Gastrocnemius medialis (tissue), 4 donors: ENCODE measurements at regions of chr10 and their contacts with region 1.

Region 1: DNA sequence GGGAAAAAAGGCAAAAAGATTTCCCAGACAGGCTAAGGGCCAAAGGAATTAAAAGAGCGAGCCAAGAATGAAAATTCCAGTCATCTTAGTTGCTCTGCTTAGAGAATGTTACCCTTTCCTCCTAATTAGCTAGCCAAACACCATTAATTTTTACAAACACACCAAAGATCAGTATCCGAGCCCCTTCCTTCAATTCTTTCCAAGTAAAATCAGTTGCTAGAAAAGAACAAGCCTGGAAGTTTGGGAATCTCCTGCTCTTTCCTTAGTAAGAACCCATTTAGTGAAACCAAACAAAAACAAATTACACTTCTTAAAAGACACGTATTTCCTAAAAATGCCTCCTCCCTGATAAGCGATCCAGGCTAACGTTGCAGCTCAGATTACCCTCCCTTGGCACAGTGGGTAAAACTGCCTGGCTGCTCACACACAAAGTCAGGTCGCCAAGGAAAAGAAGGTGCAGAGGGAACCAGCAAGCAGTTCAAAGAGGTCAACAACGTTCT is 57.1 kb upstream of the ABLIM1 start:
- DNase-seq: no peak
- ATAC-seq: peak; percentile 51 to 52
- H3K4me3 ChIP-seq: no peak overlapping the region
- H3K27ac ChIP-seq: peak overlapping the region; percentile 41 to 72 (median 63)
- H3K4me1 ChIP-seq: peaks cover 17 to 48% of the 10 kb centered on the region in 2 donors
- H3K27me3 ChIP-seq: no peaks in the 10 kb centered on the region
- CTCF ChIP-seq: no peak
- POLR2A ChIP-seq: no peak

Region 2: DNA sequence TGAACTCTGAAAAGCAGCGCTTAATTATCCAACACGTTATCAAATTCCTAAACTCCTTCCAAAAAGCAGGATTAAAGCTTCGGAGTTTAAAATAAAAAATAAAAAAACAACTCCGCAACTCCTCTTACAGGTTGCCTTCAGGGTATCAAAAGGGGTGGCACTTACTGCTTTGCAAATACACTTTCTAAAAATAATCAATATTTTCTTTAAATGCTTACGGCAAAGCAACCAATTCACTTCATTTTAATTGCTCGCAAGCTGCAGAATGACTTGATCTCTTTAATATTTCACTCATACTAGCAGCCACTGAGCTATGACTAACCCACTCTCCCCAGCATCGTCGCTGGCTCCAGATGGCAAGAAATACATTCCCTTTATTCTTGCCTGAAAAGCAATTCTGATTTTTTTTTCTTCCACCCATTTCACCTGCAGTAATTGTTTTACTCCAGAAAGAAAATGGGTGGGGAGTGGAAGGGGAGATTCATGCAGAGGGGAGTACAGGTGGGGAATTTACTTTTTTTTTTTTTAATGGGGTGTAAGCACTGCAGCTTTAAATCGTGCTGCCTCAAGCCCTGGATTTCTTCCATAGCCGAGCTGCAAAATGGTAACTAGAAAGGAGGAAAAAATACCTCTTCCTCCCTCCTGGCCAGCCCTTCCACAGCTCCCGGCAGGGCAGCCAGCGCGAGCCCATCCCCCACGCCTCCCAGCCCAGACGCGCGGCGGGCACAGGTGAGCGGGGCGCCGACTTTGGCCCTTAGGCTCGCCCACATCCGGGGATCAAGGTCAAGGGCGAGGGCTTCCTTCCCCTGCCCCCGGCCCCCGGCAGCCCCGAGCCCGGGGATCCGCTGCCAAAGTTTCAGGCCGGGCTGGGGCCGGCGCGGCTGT is 52.1 kb after region 1 on chr10:
- in situ Hi-C with region 1: no loop called
- intact Hi-C with region 1: loop called (anchors 5 kb)
- DNase-seq: no peak
- ATAC-seq: peak; percentile 48 to 51
- H3K4me3 ChIP-seq: peak overlapping the region; percentile 57 to 73 (median 70)
- H3K27ac ChIP-seq: peak overlapping the region; percentile 47 to 79 (median 62)
- H3K4me1 ChIP-seq: peaks cover 5 to 13% of the 10 kb centered on the region in 2 donors
- H3K27me3 ChIP-seq: peaks cover 7 to 37% (median 13%) of the 10 kb centered on the region in 3 donors
- CTCF ChIP-seq: no peak
- POLR2A ChIP-seq: no peak